A549 (cell line): ENCODE measurements at regions of chr16 and their contacts with region 1.

Region 1: GRCh38 chr16:4288148-4288921 is 15.5 kb upstream of the TFAP4 start:
- DNase-seq: peak; percentile 74 to 86
- ATAC-seq: peak; percentile 83 to 85
- H3K4me3 ChIP-seq: no peak overlapping the region
- H3K27ac ChIP-seq: peak overlapping the region; percentile 50 to 86
- H3K4me1 ChIP-seq: peaks cover 60% of the 10 kb centered on the region
- CTCF ChIP-seq: peak; percentile 97
- EP300 ChIP-seq: no peak
- POLR2A ChIP-seq: no peak
- RAD21 ChIP-seq: peak; percentile 93 to 97

Region 2: DNA sequence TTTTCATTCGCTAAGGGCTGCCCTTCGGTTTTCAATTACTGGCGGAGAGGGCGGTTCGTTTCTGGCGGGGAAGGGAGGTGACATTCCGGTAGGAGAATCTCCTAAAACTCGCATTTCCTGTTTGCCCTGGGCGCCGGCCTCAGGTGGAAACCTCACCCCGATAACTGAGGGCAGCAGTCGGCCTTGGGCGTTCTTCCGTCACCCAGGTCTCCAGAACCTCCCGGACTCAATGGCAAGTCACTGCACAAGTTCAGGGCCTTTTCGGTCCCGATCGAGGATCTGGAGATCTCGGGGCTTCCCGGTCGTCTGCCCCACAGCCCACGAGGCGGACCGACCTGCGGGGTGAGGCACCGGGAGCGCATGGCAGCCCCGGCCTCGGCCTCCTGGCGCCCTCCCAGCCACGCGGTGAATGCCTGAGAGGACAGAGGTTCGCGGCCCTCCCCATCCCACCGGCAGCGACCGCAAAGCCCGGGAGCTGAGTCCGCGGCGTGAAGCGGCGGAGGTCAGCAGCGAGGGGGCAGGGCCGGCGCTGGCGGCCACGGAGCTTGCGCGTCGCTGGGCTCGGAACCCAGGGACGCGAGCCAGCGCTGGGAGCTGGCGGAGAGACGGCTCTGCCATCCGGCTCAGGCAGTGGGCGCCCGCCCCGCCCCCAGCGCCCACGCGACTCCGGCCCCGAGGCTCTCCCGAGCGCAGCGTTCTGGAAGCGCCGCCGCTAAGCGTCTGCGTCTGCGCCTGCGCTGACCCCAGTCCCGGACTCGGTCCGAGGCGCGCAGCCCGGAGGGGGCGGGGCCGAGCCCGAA is 104.9 kb before region 1 on chr16:
- CTCF ChIA-PET with region 1: no interaction called
- POLR2A ChIA-PET with region 1: no interaction called
- DNase-seq: peak; percentile 88 to 91
- ATAC-seq: peak; percentile 88 to 94
- H3K4me3 ChIP-seq: peak overlapping the region; percentile 84
- H3K27ac ChIP-seq: peak overlapping the region; percentile 97 to 99
- H3K4me1 ChIP-seq: peaks cover 5% of the 10 kb centered on the region; the same call in 2 of the 3 replicates
- CTCF ChIP-seq: no peak
- EP300 ChIP-seq: no peak
- POLR2A ChIP-seq: peak; percentile 43; the same call in 1 of the 2 replicates
- RAD21 ChIP-seq: no peak; a peak in 2 of 5 replicates

Region 3: GRCh38 chr16:4271176-4272066 is 16.9 kb before region 1 on chr16:
- CTCF ChIA-PET with region 1: interaction called, 152 read pairs
- POLR2A ChIA-PET with region 1: interaction called, 7 read pairs
- DNase-seq: peak; percentile 89 to 96
- ATAC-seq: peak; percentile 73 to 86
- H3K4me3 ChIP-seq: peak overlapping the region; percentile 87
- H3K27ac ChIP-seq: peak overlapping the region; percentile 98 to 99
- H3K4me1 ChIP-seq: peaks cover 10% of the 10 kb centered on the region
- CTCF ChIP-seq: peak; percentile 16; the same call in 1 of the 3 replicates
- EP300 ChIP-seq: no peak
- POLR2A ChIP-seq: peak; percentile 61
- RAD21 ChIP-seq: no peak

Region 4: GRCh38 chr16:4298761-4299522 is 10.6 kb after region 1 on chr16:
- CTCF ChIA-PET with region 1: interaction called, 213 read pairs
- POLR2A ChIA-PET with region 1: interaction called, 7 read pairs
- DNase-seq: peak; percentile 95 to 97
- ATAC-seq: peak; percentile 96 to 99
- H3K4me3 ChIP-seq: peak overlapping the region; percentile 11; the same call in 1 of the 3 replicates
- H3K27ac ChIP-seq: peak overlapping the region; percentile 94 to 99
- H3K4me1 ChIP-seq: peaks cover 57% of the 10 kb centered on the region
- CTCF ChIP-seq: no peak
- EP300 ChIP-seq: peak in 1 of 2 experiments; percentile 49; a peak in 2 of 5 replicates
- POLR2A ChIP-seq: peak; percentile 26; the same call in 1 of the 2 replicates
- RAD21 ChIP-seq: peak; percentile 15 to 39; a peak in 2 of 5 replicates

Region 5: DNA sequence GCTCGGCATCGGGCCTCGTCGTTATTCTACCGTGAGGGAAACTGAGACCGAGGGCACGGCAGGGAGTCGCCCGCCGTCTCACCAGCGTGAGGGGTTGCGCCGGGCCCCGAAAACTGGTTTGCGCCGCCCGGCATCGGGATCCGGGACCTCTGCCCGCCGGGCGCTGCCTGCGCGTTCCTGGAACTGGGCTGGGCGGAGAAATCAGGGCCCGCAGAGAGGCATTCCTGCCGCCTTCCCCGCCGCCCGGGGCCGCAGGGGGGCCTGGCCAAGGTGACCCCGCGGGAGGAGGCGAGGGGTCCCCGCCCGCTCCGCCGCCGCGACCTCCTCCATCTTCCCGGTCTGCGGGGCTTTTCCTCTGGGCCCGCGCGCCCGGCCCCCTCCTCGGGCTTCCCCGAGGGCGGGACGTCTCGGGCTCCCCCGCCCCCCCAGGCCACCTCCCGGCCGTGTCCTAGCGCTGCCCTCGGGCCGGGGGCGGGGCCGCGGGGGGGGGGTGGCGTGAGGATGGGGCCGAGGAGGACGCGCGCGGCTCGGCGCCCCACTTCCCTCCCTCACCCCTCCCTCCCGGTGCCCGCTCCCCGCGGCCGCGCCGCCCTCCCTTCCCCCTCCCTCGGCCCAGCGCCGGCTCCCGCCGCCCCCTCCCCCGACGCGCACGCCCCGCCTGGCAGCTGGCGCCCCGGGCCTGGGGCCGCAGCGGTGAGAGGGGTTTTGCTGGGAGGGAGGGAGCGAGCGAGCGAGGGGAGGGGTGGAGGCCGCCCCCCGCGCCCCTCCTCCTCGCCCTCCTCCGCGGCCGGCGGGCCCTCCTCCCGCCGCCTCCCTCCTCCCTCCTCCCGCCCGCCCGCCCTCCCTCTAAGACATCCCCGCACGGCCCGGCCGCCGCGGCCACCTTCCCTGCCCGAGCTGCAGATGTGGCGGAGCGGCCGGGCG is 27.1 kb after region 1 on chr16 and contains the start of gene GLIS2:
- CTCF ChIA-PET with region 1: interaction called, 213 read pairs
- POLR2A ChIA-PET with region 1: interaction called, 3 read pairs
- DNase-seq: peak; percentile 78 to 89
- ATAC-seq: peak; percentile 36 to 37
- H3K4me3 ChIP-seq: peak within 1 kb of the TSS; percentile 87
- H3K27ac ChIP-seq: peak within 1 kb of the TSS; percentile 96
- H3K4me1 ChIP-seq: peaks cover 52% of the 10 kb centered on the region
- CTCF ChIP-seq: no peak
- EP300 ChIP-seq: peak in 1 of 2 experiments; percentile 51; a peak in 2 of 5 replicates
- POLR2A ChIP-seq: no peak; the same call in none of the 2 replicates
- RAD21 ChIP-seq: no peak; a peak in 1 of 5 replicates
- polyA plus RNA-seq, gene GLIS2: 5.5 and 6.8 TPM in 2 replicates

Region 6: GRCh38 chr16:4339909-4340308 is 51.6 kb after region 1 on chr16:
- CTCF ChIA-PET with region 1: interaction called, 81 read pairs
- POLR2A ChIA-PET with region 1: no interaction called
- DNase-seq: no peak
- ATAC-seq: peak in 1 of 2 experiments; percentile 11; a peak in 3 of 6 replicates
- H3K4me3 ChIP-seq: no peak overlapping the region
- H3K27ac ChIP-seq: no peak overlapping the region
- H3K4me1 ChIP-seq: peaks cover 19% of the 10 kb centered on the region; the same call in 2 of the 3 replicates
- CTCF ChIP-seq: no peak
- EP300 ChIP-seq: no peak
- POLR2A ChIP-seq: no peak
- RAD21 ChIP-seq: no peak